Naive thymus-derived CD8-positive, alpha-beta T cell (primary cell): ENCODE measurements at regions of chr19 and their contacts with region 1.

Region 1: GRCh38 chr19:39412100-39412866 is at the start of gene PLEKHG2:
- DNase-seq: peak; percentile 91 to 100 (median 98)
- ATAC-seq: peak; percentile 58 to 70
- H3K4me3 Mint-ChIP-seq: peak within 1 kb of the TSS; percentile 79 to 98 (median 89)
- H3K27ac Mint-ChIP-seq: peak within 1 kb of the TSS; percentile 93 to 100 (median 98)
- H3K4me1 Mint-ChIP-seq: peaks cover 39 to 62% (median 42%) of the 10 kb centered on the region in 4 donors
- H3K27me3 Mint-ChIP-seq: peaks cover 0 to 4% (median 0%) of the 10 kb centered on the region in 5 donors
- polyA plus RNA-seq, gene PLEKHG2: 4.2 to 5.0 (median 4.8) TPM

Region 2: GRCh38 chr19:39390755-39391592 is 21.3 kb before region 1 on chr19 and contains the starts of genes MED29 and PAF1:
- POLR2A ChIA-PET with region 1: interaction called, 258 read pairs
- DNase-seq: peak; percentile 86 to 99 (median 97)
- ATAC-seq: peak; percentile 91 to 95
- H3K4me3 Mint-ChIP-seq: peak within 1 kb of the TSS; percentile 95 to 98 (median 98)
- H3K27ac Mint-ChIP-seq: peak within 1 kb of the TSS; percentile 94 to 100 (median 100)
- H3K4me1 Mint-ChIP-seq: peaks cover 15 to 58% (median 50%) of the 10 kb centered on the region in 4 donors
- H3K27me3 Mint-ChIP-seq: no peaks in the 10 kb centered on the region
- polyA plus RNA-seq, gene MED29: 48.1 to 71.4 (median 59.6) TPM
- polyA plus RNA-seq, gene PAF1: 30.7 to 53.0 (median 43.8) TPM

Region 3: GRCh38 chr19:39397360-39398296 is 14.7 kb before region 1 on chr19:
- POLR2A ChIA-PET with region 1: interaction called, 258 read pairs
- DNase-seq: peak; percentile 86 to 96 (median 94)
- ATAC-seq: peak; percentile 52
- H3K4me3 Mint-ChIP-seq: peak overlapping the region; percentile 40 to 84 (median 78)
- H3K27ac Mint-ChIP-seq: peak overlapping the region; percentile 90 to 99 (median 96)
- H3K4me1 Mint-ChIP-seq: peaks cover 27 to 70% (median 63%) of the 10 kb centered on the region in 4 donors
- H3K27me3 Mint-ChIP-seq: no peaks in the 10 kb centered on the region

Region 4: DNA sequence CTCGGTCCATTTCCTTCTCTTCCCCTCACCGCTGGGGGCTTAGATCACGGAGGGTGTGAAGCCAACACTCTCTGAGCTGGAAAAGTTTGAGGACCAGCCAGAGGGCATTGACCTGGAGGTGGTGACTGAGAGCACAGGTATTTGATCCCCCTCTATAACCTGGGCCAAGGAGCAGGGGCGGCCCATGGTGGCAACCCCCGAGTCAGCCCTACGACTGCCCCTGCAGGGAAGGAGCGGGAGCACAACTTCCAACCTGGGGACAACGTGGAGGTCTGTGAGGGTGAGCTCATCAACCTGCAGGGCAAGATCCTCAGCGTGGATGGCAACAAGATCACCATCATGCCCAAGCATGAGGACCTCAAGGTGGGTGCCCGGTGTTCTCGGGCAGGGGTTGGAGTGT is 56.8 kb after region 1 on chr19:
- POLR2A ChIA-PET with region 1: no interaction called
- DNase-seq: no peak
- ATAC-seq: no peak
- H3K4me3 Mint-ChIP-seq: no peak overlapping the region
- H3K27ac Mint-ChIP-seq: peak overlapping the region in 2 of 10 donors; percentile 18 to 74
- H3K4me1 Mint-ChIP-seq: peaks cover 0 to 16% (median 6%) of the 10 kb centered on the region in 4 donors
- H3K27me3 Mint-ChIP-seq: no peaks in the 10 kb centered on the region